BJ (cell line): ENCODE measurements at regions of chr9 and their contacts with region 1.

Region 1: GRCh38 chr9:69672596-69673310 is 582 bp upstream of the APBA1 start:
- DNase-seq: no peak
- H3K4me3 ChIP-seq: peak overlapping the region; percentile 84
- H3K27me3 ChIP-seq: no peaks in the 10 kb centered on the region
- CTCF ChIP-seq: peak; percentile 91

Region 2: GRCh38 chr9:69660304-69660703 is 12.4 kb before region 1 on chr9:
- CTCF ChIA-PET with region 1: interaction called, 21 read pairs
- POLR2A ChIA-PET with region 1: no interaction called
- DNase-seq: no peak
- H3K4me3 ChIP-seq: no peak overlapping the region
- H3K27me3 ChIP-seq: no peaks in the 10 kb centered on the region
- CTCF ChIP-seq: no peak

Region 3: DNA sequence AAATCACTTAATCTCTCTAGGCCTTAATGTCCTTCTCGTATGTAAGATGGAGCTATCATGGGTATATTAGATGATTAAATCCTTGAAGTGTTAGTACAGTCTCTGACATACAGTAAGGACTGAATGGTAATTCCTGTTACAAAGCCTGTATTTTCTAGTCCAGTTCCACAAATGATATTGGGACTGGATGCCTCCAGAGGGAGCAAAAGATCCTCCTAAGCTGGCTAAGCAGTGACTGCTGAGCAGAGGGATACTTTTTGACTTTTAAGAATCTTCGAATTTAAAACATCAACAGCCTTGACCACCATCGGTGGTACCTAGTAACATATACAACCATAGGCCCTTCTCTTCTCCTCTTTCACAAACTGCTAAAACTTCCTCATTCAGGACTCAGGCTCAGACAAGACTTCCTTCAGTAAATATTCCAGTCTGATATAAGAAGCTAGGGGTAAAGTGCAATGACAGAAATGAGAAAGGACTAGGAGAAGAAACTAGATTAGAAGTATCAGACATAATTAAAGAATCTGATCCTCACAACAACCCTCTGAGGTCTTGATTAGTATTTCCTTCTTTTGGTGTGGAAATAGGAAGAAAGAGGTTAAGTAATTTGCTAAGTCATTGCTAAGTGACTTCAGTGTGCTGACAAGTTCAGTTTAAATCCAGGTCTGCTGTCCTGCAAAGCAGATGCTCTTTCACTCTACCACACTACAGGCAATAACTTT is 73.1 kb after region 1 on chr9:
- CTCF ChIA-PET with region 1: interaction called, 19 read pairs
- POLR2A ChIA-PET with region 1: no interaction called
- DNase-seq: no peak
- H3K4me3 ChIP-seq: no peak overlapping the region
- H3K27me3 ChIP-seq: no peaks in the 10 kb centered on the region
- CTCF ChIP-seq: peak; percentile 40; the same call in 1 of the 2 replicates